A673 (cell line): ENCODE measurements at regions of chr20 and their contacts with region 1.

Region 1: GRCh38 chr20:3710703-3711483 is 1.5 kb downstream of the SIGLEC1 start:
- DNase-seq: peak; percentile 80
- H3K4me3 ChIP-seq: no peak overlapping the region
- H3K27ac ChIP-seq: no peak overlapping the region
- H3K4me1 ChIP-seq: no peaks in the 10 kb centered on the region
- H3K27me3 ChIP-seq: no peaks in the 10 kb centered on the region
- CTCF ChIP-seq: peak; percentile 98

Region 2: DNA sequence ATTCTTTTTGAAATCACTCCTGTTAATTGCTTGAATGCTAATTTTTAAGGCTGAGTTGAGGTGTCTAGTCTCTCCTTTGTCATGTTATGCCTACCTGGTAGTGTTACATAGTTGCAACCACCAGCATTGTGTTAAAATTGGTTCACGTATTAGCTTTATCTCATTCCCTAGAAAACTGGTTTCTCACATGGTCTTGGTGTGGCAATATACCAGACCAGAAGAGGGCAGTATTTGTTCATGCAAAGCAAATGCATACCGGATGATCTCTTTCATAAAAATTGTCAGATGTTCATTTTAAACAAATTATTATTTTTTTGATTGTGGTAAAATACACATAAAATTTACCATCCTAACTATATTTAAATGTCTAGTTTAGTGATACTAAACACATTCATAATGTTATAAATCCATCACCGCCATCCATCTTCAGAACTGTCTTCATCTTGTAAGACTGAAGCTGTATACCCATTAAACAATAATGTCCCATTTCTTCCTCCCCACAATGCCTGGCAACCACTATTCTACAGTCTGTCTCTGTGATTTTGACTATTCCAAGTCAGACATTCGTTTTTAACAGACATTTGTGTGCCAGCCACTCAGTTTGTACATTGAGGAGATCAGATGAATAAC is 147.2 kb before region 1 on chr20:
- CTCF ChIA-PET with region 1: interaction called, 10 read pairs
- POLR2A ChIA-PET with region 1: no interaction called
- intact Hi-C with region 1: loop called (anchors 5 kb)
- DNase-seq: peak; percentile 59
- H3K4me3 ChIP-seq: no peak overlapping the region
- H3K27ac ChIP-seq: no peak overlapping the region
- H3K4me1 ChIP-seq: no peaks in the 10 kb centered on the region
- H3K27me3 ChIP-seq: no peaks in the 10 kb centered on the region
- CTCF ChIP-seq: peak; percentile 87

Region 3: GRCh38 chr20:3652676-3653596 is 58.0 kb before region 1 on chr20:
- CTCF ChIA-PET with region 1: interaction called, 11 read pairs
- POLR2A ChIA-PET with region 1: no interaction called
- intact Hi-C with region 1: no loop called
- DNase-seq: no peak
- H3K4me3 ChIP-seq: no peak overlapping the region
- H3K27ac ChIP-seq: no peak overlapping the region
- H3K4me1 ChIP-seq: no peaks in the 10 kb centered on the region
- H3K27me3 ChIP-seq: no peaks in the 10 kb centered on the region
- CTCF ChIP-seq: no peak

Region 4: DNA sequence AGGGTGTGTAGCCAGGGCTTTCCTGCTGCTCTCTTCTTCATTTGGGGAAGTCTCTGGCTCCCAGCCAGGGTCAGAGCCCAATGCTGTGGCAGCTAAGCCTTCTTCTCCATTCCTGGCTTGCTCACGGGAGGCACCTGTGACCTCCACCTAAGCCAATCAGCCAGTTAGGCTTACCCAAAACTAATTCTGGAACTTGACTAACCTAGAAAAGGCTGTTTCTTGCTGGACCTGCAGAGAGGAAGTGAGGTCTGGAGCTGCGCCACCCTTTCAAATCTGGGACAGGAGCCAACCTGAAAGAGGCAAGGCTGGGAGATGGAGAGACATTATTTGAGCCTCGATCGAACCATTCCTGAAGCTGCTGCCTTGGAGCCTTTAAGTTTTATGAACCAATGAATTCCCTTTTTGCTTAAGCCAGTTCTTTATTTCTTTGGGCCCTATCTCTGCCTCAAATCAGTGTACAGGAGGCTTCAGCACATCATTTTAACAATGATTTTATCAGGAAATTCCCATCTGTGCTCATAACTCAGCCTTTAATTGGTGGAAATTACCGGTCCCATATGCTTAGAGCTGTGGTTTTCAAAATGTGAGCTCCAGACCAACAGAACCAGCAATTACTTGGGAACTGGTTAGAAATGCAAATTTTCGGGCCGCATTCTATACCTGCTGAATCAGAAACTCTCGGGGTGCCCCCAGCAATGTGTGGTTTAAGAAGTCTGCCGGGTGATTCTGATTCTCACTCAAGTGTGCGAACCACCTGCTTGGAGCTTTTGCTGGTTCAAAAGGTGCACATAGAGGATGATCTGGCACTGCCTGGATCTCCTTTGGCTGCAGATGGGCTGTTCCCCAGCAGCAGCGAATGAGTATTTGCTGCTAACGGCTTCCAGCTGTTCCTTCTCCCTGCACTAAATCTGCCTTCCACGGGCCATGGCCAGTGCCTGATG is 401.9 kb after region 1 on chr20:
- CTCF ChIA-PET with region 1: no interaction called
- POLR2A ChIA-PET with region 1: no interaction called
- intact Hi-C with region 1: no loop called
- DNase-seq: peak; percentile 57
- H3K4me3 ChIP-seq: no peak overlapping the region
- H3K27ac ChIP-seq: no peak overlapping the region
- H3K4me1 ChIP-seq: peaks cover 31% of the 10 kb centered on the region
- H3K27me3 ChIP-seq: no peaks in the 10 kb centered on the region
- CTCF ChIP-seq: no peak